Endothelial cell of umbilical vein (primary cell): ENCODE measurements at regions of chr11 and their contacts with region 1.

Region 1: GRCh38 chr11:130131961-130132850 is 27.4 kb upstream of the ST14 start:
- DNase-seq: peak; percentile 83
- H3K4me3 ChIP-seq: no peak overlapping the region
- H3K27ac ChIP-seq: no peak overlapping the region
- H3K4me1 ChIP-seq: no peaks in the 10 kb centered on the region
- H3K27me3 ChIP-seq: no peaks in the 10 kb centered on the region
- CTCF ChIP-seq: peak; percentile 67 to 84
- POLR2A ChIP-seq: no peak

Region 2: GRCh38 chr11:129766898-129767604 is 365.2 kb before region 1 on chr11:
- CTCF ChIA-PET with region 1: interaction called, 8 read pairs
- POLR2A ChIA-PET with region 1: no interaction called
- dilution Hi-C with region 1: no loop called
- intact Hi-C with region 1: loop called (anchors 2 kb)
- DNase-seq: peak; percentile 26
- H3K4me3 ChIP-seq: no peak overlapping the region
- H3K27ac ChIP-seq: no peak overlapping the region
- H3K4me1 ChIP-seq: no peaks in the 10 kb centered on the region
- H3K27me3 ChIP-seq: no peaks in the 10 kb centered on the region
- CTCF ChIP-seq: peak; percentile 31 to 63
- POLR2A ChIP-seq: no peak

Region 3: GRCh38 chr11:129911298-129911697 is 220.9 kb before region 1 on chr11:
- CTCF ChIA-PET with region 1: interaction called, 21 read pairs
- POLR2A ChIA-PET with region 1: no interaction called
- dilution Hi-C with region 1: no loop called
- intact Hi-C with region 1: no loop called
- DNase-seq: peak; percentile 82
- H3K4me3 ChIP-seq: peak overlapping the region in 1 of 3 experiments; percentile 21
- H3K27ac ChIP-seq: peak overlapping the region; percentile 85
- H3K4me1 ChIP-seq: peaks cover 11% of the 10 kb centered on the region
- H3K27me3 ChIP-seq: no peaks in the 10 kb centered on the region
- CTCF ChIP-seq: no peak
- POLR2A ChIP-seq: peak; percentile 21

Region 4: DNA sequence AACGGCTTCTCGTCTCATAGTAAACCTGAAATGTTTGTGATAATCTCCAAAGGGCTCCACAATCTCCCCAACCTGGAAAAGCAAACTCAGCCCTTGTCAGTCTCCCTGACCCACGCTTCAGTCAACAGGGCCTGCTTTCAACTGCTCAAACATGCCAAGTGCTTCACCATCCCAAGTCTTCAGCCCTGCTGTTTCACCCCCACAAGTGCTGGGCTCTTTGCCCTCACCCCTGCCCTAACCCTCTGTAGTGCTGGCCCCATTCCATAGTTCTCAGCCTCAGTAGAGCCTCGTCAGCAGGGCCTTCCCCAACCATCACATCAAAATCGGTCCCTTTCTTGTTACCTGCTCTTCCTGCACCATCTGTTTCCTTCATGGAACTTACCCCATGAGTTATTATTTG is 193.4 kb before region 1 on chr11:
- CTCF ChIA-PET with region 1: interaction called, 17 read pairs
- POLR2A ChIA-PET with region 1: interaction called, 3 read pairs
- dilution Hi-C with region 1: no loop called
- intact Hi-C with region 1: no loop called
- DNase-seq: no peak
- H3K4me3 ChIP-seq: no peak overlapping the region
- H3K27ac ChIP-seq: no peak overlapping the region
- H3K4me1 ChIP-seq: no peaks in the 10 kb centered on the region
- H3K27me3 ChIP-seq: no peaks in the 10 kb centered on the region
- CTCF ChIP-seq: no peak
- POLR2A ChIP-seq: no peak

Region 5: GRCh38 chr11:130002846-130003716 is 129.1 kb before region 1 on chr11:
- CTCF ChIA-PET with region 1: interaction called, 48 read pairs
- POLR2A ChIA-PET with region 1: interaction called, 15 read pairs
- dilution Hi-C with region 1: no loop called
- intact Hi-C with region 1: loop called (anchors 1 kb)
- DNase-seq: peak; percentile 98
- H3K4me3 ChIP-seq: peak overlapping the region; percentile 1 to 94 (median 53)
- H3K27ac ChIP-seq: peak overlapping the region; percentile 92
- H3K4me1 ChIP-seq: peaks cover 9% of the 10 kb centered on the region
- H3K27me3 ChIP-seq: no peaks in the 10 kb centered on the region
- CTCF ChIP-seq: no peak
- POLR2A ChIP-seq: peak; percentile 70

Region 6: DNA sequence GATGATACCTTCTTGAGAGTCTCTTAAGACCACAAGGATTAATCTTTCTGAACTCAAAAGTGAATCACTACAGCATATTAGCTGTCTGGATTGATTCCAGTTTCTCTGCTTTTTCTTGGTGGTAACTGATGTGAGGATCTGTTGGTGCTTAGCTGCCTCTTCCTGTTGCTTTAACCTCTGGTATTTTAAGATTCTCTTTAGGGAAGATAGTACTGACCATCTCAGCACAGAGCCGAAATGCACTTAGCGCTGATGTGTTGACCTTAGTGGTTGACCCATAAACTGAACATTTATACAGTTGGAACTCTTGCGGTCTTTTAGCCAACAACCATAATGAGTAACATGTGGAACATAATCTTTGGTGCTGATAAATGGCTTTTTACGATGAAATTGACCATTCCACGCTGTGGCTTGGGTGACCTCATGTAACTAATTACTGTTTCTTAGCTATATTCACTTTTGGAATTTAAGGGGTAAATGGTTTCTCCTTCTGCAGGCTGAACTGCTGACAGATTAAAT is 28.9 kb before region 1 on chr11:
- CTCF ChIA-PET with region 1: interaction called, 10 read pairs
- POLR2A ChIA-PET with region 1: no interaction called
- dilution Hi-C with region 1: no loop called
- intact Hi-C with region 1: no loop called
- DNase-seq: peak; percentile 75
- H3K4me3 ChIP-seq: no peak overlapping the region
- H3K27ac ChIP-seq: peak overlapping the region; percentile 23
- H3K4me1 ChIP-seq: peaks cover 45% of the 10 kb centered on the region
- H3K27me3 ChIP-seq: no peaks in the 10 kb centered on the region
- CTCF ChIP-seq: no peak
- POLR2A ChIP-seq: no peak

Region 7: DNA sequence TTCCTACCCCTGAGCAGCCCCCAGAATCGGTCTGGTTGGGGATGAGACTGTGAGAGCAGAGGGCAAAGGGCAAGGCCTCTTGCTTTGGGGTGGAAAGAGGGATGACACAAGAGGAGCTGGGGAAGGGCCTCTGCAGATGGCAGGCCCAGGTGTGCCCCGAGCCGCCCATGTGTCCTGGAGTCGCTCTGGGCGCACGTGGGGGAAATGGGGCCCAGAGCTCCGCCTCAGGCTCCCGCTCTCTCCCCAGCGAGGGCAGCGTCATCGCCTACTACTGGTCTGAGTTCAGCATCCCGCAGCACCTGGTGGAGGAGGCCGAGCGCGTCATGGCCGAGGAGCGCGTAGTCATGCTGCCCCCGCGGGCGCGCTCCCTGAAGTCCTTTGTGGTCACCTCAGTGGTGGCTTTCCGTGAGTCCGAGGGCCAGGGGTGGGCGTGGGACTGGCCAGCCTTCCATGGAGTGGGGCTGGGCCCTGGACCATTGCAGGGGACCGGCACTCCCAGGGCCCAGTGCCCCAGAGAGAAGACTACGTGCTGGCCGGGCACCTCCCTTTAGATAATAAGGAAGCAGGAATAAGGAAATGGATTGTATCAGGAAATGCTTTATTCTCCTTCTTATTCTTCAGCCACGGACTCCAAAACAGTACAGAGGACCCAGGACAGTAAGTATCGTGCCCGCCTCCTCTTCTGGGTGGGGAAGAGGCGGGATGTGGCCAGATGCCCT is 57.4 kb after region 1 on chr11:
- CTCF ChIA-PET with region 1: no interaction called
- POLR2A ChIA-PET with region 1: no interaction called
- dilution Hi-C with region 1: no loop called
- intact Hi-C with region 1: no loop called
- DNase-seq: no peak
- H3K4me3 ChIP-seq: no peak overlapping the region
- H3K27ac ChIP-seq: no peak overlapping the region
- H3K4me1 ChIP-seq: no peaks in the 10 kb centered on the region
- H3K27me3 ChIP-seq: no peaks in the 10 kb centered on the region
- CTCF ChIP-seq: no peak
- POLR2A ChIP-seq: no peak